Common myeloid progenitor, CD34-positive (primary cell): ENCODE measurements at regions of chr22 and their contacts with region 1.

Region 1: GRCh38 chr22:22823131-22823810 is 64.3 kb upstream of the IGLL5 start:
- DNase-seq: peak; percentile 49 to 92 (median 87)
- H3K4me3 ChIP-seq: peak overlapping the region in 1 of 7 experiments; percentile 0
- H3K27ac ChIP-seq: no peak overlapping the region
- H3K4me1 ChIP-seq: peaks cover 1 to 76% (median 49%) of the 10 kb centered on the region in 4 experiments
- H3K27me3 ChIP-seq: no peaks in the 10 kb centered on the region

Region 2: GRCh38 chr22:22770280-22770871 is 52.9 kb before region 1 on chr22:
- CTCF ChIA-PET with region 1: no interaction called
- POLR2A ChIA-PET with region 1: no interaction called
- DNase-seq: peak; percentile 36 to 56 (median 47)
- H3K4me3 ChIP-seq: no peak overlapping the region
- H3K27ac ChIP-seq: no peak overlapping the region
- H3K4me1 ChIP-seq: no peaks in the 10 kb centered on the region
- H3K27me3 ChIP-seq: peaks cover 0 to 7% (median 5%) of the 10 kb centered on the region in 5 experiments

Region 3: GRCh38 chr22:22810018-22810427 is 13.2 kb before region 1 on chr22:
- CTCF ChIA-PET with region 1: interaction called, 11 read pairs
- POLR2A ChIA-PET with region 1: no interaction called
- DNase-seq: peak; percentile 50 to 67 (median 59)
- H3K4me3 ChIP-seq: no peak overlapping the region
- H3K27ac ChIP-seq: no peak overlapping the region
- H3K4me1 ChIP-seq: peaks cover 0 to 11% (median 3%) of the 10 kb centered on the region in 4 experiments
- H3K27me3 ChIP-seq: peaks cover 0 to 4% (median 0%) of the 10 kb centered on the region in 5 experiments

Region 4: DNA sequence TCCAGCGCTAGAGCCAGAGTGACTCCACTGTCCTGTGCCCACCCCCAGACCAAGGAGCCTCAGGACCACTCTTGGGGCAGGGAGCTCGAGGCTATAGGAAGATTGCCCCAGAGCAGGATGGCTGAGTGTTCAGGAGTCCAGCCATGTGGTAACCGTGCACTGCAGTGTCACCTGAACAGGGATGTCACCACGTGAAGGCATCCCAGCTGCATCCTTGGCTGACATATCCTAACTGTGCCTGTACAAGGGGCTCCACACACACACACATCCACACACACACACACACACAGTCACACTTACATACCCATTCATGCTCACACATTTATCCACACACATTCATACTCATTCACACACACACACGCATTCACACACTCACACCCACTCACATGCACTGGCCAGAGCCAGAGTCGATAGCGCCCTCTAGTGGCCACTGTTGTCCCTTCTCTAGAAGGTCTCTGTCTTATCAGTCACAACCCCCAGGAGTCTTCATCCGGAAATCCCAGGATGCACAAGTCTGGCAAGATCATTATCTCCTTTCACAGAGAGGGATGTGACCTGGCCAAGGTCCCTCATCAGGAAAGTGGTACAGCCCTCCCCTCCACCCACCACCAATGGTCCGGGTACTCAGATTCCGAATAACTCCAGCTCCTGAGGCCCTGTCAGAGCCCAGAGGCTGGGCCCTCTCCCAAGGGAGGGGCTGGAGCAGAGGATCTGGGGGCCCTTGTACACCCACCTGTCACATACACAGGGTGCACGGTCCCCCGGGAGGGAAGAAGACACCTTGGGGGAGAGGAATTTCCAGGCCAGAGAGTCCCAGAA is 119.4 kb after region 1 on chr22:
- CTCF ChIA-PET with region 1: no interaction called
- POLR2A ChIA-PET with region 1: no interaction called
- DNase-seq: peak; percentile 81 to 89 (median 86)
- H3K4me3 ChIP-seq: no peak overlapping the region
- H3K27ac ChIP-seq: no peak overlapping the region
- H3K4me1 ChIP-seq: peaks cover 0 to 3% (median 0%) of the 10 kb centered on the region in 4 experiments
- H3K27me3 ChIP-seq: no peaks in the 10 kb centered on the region